ENCODE measurements at regions of chr20 and their contacts with region 1.

Region 1: GRCh38 chr20:31500527-31500926 is 13.7 kb upstream of the HM13 start:
- DNase-seq: no peak
- H3K4me3 ChIP-seq: no peak overlapping the region
- H3K27ac ChIP-seq: no peak overlapping the region
- H3K4me1 ChIP-seq: peaks cover 2 to 5% of the 10 kb centered on the region in 2 experiments; a peak in 2 of 4 replicates
- H3K27me3 ChIP-seq: no peaks in the 10 kb centered on the region
- CTCF ChIP-seq: no peak
- EP300 ChIP-seq: no peak
- RAD21 ChIP-seq: no peak

Region 2: GRCh38 chr20:31454365-31454764 is 46.2 kb before region 1 on chr20:
- CTCF ChIA-PET with region 1: interaction called, 145 read pairs
- POLR2A ChIA-PET with region 1: no interaction called
- DNase-seq: no peak
- H3K4me3 ChIP-seq: no peak overlapping the region
- H3K27ac ChIP-seq: no peak overlapping the region
- H3K4me1 ChIP-seq: no peaks in the 10 kb centered on the region
- H3K27me3 ChIP-seq: peaks cover 4% of the 10 kb centered on the region; the same call in 1 of the 2 replicates
- CTCF ChIP-seq: no peak
- EP300 ChIP-seq: no peak
- RAD21 ChIP-seq: no peak

Region 3: DNA sequence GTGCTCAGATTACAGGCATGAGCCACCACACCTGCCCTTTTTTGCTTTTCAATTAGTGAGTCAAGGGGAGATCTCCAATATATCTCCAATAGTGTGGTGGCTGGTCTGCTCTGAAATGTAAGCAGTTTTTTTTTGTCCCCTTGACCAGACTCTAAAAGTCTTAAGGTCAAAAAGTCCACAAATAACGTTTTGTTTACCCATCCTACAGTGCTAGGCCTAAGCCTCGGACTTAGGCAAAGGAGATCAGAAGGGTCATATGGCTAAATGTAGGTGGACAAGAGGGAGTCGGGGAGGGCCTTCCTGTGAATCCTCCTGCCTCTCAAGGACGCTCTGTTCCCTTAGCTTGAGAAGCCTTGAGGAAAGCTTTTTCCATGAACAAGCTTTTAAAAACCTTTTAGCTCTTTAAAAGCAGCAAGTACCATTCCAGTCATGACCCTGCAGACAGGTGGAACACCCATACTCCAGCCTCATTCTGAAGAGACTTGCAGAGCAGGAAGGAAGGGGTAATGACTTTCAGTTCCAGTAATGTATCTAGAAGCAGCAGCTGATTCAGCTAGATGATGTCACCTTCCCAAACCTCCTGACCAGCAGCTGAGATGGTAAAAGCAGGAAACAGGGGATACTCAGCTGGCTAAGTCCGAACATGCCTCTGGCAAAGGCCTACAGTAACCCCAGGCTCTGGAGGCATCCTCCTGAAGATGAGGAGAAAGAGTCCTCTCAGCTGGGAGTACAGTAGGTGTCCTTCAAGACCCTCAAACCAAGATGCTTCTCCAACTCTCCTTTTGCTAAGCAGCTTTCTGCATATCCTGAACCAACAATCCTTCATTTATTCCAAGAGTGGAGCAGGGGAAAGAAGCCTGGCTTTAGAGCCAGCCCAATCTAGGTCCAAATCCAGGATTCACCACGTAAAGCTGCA is 198.5 kb after region 1 on chr20:
- CTCF ChIA-PET with region 1: no interaction called
- POLR2A ChIA-PET with region 1: no interaction called
- DNase-seq: no peak
- H3K4me3 ChIP-seq: no peak overlapping the region
- H3K27ac ChIP-seq: peak overlapping the region; percentile 85 to 92
- H3K4me1 ChIP-seq: peaks cover 3 to 42% of the 10 kb centered on the region in 2 experiments; a peak in 3 of 4 replicates
- H3K27me3 ChIP-seq: no peaks in the 10 kb centered on the region
- CTCF ChIP-seq: no peak
- EP300 ChIP-seq: peak in 1 of 2 experiments; percentile 78; a peak in 1 of 4 replicates
- RAD21 ChIP-seq: no peak

Measured in SK-N-SH (cell line).